Caco-2 (cell line): ENCODE measurements at regions of chr15 and their contacts with region 1.

Region 1: DNA sequence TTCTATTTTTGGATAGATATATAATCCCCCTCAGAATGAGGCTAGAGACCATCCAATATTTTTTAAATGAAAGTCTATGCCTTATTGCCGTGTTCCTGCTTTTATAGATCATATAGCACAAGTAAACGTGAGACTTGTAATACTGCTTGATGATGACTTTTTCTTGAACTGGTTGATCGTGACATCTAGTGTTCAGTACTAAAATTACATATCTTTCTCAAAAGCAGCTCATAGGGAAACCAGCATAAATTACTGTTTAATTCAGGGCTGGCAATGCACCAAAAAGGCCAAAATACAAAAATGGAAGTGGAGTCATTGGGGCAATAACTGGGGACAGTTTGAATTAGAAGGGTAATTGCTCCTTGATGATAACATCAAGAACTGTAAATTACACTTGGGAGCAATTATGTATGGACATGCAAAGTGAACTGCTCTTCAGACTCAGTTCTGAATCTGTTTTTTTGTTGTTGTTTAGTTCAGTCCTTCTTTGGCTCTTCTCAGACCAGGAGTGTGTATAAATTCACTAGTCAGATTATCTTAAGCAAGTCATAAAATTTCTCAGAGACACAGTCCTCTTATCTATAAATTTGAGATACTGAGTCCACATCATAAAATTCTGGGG is 325.3 kb downstream of the THSD4 start:
- DNase-seq: peak in 1 of 2 experiments; percentile 22
- H3K4me3 ChIP-seq: no peak overlapping the region
- H3K4me3 Mint-ChIP-seq: no peak overlapping the region
- H3K27ac Mint-ChIP-seq: no peak overlapping the region
- H3K4me1 ChIP-seq: no peaks in the 10 kb centered on the region; the same call in 1 of the 2 replicates
- H3K4me1 Mint-ChIP-seq: no peaks in the 10 kb centered on the region
- H3K27me3 ChIP-seq: no peaks in the 10 kb centered on the region
- H3K27me3 Mint-ChIP-seq: peaks cover 2% of the 10 kb centered on the region
- CTCF ChIP-seq: peak; percentile 36 to 49

Region 2: DNA sequence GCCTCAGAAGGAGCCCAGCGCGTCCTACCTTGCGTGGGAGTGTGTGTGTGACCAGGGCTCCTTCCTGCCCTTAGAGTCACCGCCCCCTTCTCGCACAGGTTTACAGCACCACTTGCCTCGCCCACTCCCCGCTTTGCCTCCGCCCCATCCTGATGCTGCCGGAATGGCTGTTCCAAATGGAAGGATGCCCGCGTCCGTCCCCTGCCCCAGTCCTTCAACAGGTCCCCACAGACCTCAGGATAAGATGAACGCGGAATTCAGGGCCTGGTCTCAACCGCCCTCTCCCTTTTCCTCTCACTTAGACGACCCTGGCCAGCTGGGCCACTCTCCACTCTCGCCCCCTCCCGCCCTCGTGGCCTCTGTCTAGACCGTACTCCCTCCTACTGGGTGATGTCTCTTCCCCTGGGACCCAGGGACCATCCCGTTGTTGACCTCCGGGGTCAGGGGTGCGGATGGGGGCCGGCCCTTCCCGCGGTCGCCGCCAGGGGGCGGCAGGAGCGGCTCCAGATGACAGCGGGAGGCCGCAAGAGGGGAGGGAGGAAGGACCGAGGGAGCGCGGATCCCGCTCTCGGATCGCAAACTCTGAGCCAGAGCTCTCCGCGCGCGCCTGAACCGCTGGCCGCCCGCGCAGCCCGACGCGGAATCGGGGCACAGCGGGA is 325.6 kb before region 1 on chr15 and contains the start of gene THSD4:
- CTCF ChIA-PET with region 1: interaction called, 8 read pairs
- POLR2A ChIA-PET with region 1: no interaction called
- intact Hi-C with region 1: loop called (anchors 1 kb)
- DNase-seq: peak; percentile 68 to 83
- H3K4me3 ChIP-seq: peak within 1 kb of the TSS; percentile 38
- H3K4me3 Mint-ChIP-seq: peak within 1 kb of the TSS; percentile 74
- H3K27ac Mint-ChIP-seq: no peak within 1 kb of the TSS
- H3K4me1 ChIP-seq: no peaks in the 10 kb centered on the region; the same call in 1 of the 2 replicates
- H3K4me1 Mint-ChIP-seq: peaks cover 9% of the 10 kb centered on the region
- H3K27me3 ChIP-seq: peaks cover 1% of the 10 kb centered on the region; the same call in 1 of the 2 replicates
- H3K27me3 Mint-ChIP-seq: peaks cover 19% of the 10 kb centered on the region
- CTCF ChIP-seq: peak; percentile 90 to 98
- total RNA-seq, gene THSD4: 0.29 and 0.44 TPM in 2 replicates

Region 3: DNA sequence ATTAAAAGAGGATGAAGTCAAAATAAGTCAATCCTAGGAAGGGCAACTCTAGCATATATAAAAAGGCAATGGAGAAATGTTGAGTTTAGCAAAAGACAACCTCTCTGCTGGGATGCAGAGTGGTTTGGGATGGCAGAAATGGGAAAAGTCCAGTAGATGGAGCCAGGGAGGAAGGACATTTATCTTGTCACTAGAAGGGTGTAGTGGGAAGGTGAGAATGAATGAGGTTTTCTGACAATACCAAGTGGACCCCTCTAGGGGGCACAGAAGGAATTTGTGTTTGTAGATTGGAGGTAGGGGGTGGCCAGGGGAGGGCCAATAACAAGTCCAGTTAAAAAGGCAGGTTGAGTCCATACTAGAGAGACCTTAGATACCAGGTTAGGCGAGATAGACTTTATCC is 245.4 kb before region 1 on chr15:
- CTCF ChIA-PET with region 1: interaction called, 4 read pairs
- POLR2A ChIA-PET with region 1: no interaction called
- intact Hi-C with region 1: loop called (anchors 1 kb)
- DNase-seq: peak in 1 of 2 experiments; percentile 29
- H3K4me3 ChIP-seq: no peak overlapping the region
- H3K4me3 Mint-ChIP-seq: no peak overlapping the region
- H3K27ac Mint-ChIP-seq: no peak overlapping the region
- H3K4me1 ChIP-seq: no peaks in the 10 kb centered on the region
- H3K4me1 Mint-ChIP-seq: no peaks in the 10 kb centered on the region
- H3K27me3 ChIP-seq: no peaks in the 10 kb centered on the region; the same call in 1 of the 2 replicates
- H3K27me3 Mint-ChIP-seq: peaks cover 8% of the 10 kb centered on the region
- CTCF ChIP-seq: peak; percentile 31 to 48

Region 4: GRCh38 chr15:71386448-71387236 is 54.0 kb before region 1 on chr15:
- CTCF ChIA-PET with region 1: interaction called, 21 read pairs
- POLR2A ChIA-PET with region 1: no interaction called
- intact Hi-C with region 1: loop called (anchors 1 kb)
- DNase-seq: peak in 1 of 2 experiments; percentile 9
- H3K4me3 ChIP-seq: no peak overlapping the region
- H3K4me3 Mint-ChIP-seq: no peak overlapping the region
- H3K27ac Mint-ChIP-seq: no peak overlapping the region
- H3K4me1 ChIP-seq: no peaks in the 10 kb centered on the region
- H3K4me1 Mint-ChIP-seq: peaks cover 7% of the 10 kb centered on the region
- H3K27me3 ChIP-seq: no peaks in the 10 kb centered on the region
- H3K27me3 Mint-ChIP-seq: peaks cover 3% of the 10 kb centered on the region
- CTCF ChIP-seq: peak; percentile 12 to 33

Region 5: GRCh38 chr15:71397377-71397776 is 43.2 kb before region 1 on chr15:
- CTCF ChIA-PET with region 1: no interaction called
- POLR2A ChIA-PET with region 1: no interaction called
- intact Hi-C with region 1: no loop called
- DNase-seq: no peak
- H3K4me3 ChIP-seq: no peak overlapping the region
- H3K4me3 Mint-ChIP-seq: no peak overlapping the region
- H3K27ac Mint-ChIP-seq: no peak overlapping the region
- H3K4me1 ChIP-seq: no peaks in the 10 kb centered on the region
- H3K4me1 Mint-ChIP-seq: no peaks in the 10 kb centered on the region
- H3K27me3 ChIP-seq: no peaks in the 10 kb centered on the region
- H3K27me3 Mint-ChIP-seq: peaks cover 16% of the 10 kb centered on the region
- CTCF ChIP-seq: no peak